ENCODE measurements at regions of chr6 and their contacts with region 1.

Region 1: GRCh38 chr6:135014353-135014832 is 40.2 kb downstream of the HBS1L start:
- DNase-seq: no peak
- H3K4me3 Mint-ChIP-seq: peak overlapping the region; percentile 54
- H3K27ac Mint-ChIP-seq: peak overlapping the region; percentile 92
- H3K4me1 Mint-ChIP-seq: peaks cover 57% of the 10 kb centered on the region
- H3K27me3 Mint-ChIP-seq: no peaks in the 10 kb centered on the region

Region 2: DNA sequence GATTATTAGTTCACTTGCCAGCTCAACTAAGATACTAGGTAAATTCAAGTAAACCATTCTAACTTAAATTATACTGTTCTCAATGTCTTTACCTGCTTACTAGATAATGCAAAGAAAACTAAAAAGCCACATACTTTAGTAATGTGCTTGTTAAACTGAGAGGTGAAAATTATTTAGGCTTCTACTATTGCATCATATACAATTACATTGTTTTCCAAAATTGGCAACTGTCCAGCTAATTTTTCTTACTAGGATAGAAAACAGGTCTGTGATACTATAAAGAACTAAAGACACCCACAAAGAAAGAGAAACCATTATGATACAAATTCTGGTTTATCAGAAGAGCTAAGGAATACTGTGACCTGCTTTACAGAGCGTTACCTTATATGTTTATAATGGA is 18.9 kb before region 1 on chr6:
- intact Hi-C with region 1: loop called (anchors 2 kb)
- DNase-seq: no peak
- H3K4me3 Mint-ChIP-seq: no peak overlapping the region
- H3K27ac Mint-ChIP-seq: no peak overlapping the region
- H3K4me1 Mint-ChIP-seq: peaks cover 23% of the 10 kb centered on the region
- H3K27me3 Mint-ChIP-seq: no peaks in the 10 kb centered on the region

Region 3: GRCh38 chr6:135075018-135075417 is 60.6 kb after region 1 on chr6:
- intact Hi-C with region 1: no loop called
- DNase-seq: no peak
- H3K4me3 Mint-ChIP-seq: no peak overlapping the region
- H3K27ac Mint-ChIP-seq: no peak overlapping the region
- H3K4me1 Mint-ChIP-seq: peaks cover 23% of the 10 kb centered on the region
- H3K27me3 Mint-ChIP-seq: no peaks in the 10 kb centered on the region